ENCODE measurements at regions of chr17 and their contacts with region 1.

Region 1: DNA sequence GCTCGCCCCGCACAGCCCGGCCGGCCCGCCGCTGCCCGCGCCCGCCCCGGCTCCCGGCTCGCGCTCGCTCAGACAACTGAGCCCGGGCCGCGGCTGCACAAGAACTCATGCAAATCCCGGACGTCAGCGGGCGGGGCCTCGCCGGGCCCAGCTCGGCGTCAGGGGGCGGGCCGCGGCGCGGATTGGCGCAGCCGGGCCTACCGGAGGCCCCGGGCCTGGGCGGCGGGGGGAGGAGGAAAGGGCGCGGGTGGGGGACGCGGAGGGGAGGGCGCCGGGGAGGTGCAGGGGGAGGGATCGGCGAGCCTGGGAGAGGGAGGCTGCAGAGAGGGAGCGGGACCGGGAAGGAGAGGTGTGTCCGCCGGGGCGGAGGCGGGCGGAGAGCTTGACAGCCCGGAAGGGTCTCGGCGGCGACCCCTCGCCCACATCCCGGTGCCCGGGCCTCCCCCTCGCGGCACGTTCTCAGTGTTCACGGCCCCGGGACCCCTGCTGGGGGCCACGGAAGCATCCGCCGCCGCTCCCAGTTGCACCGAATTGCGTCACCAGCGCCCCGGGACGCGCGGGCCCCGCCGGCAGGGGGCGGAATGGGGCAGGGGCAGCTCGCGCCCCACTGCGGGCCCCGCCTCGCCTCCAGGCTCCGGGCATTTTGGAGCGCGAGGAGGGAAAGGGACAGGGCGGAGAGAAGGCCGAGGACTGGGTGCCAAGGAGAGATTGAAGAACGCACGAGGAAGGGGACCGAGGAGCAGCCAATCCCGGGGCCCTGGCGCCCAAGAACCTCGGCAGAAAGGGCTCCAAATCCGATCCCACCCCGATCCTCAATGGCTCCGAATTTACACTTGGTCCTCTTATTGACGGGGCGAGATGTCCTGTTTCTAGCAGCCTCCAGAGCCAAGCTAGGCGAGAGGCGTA is at the start of gene CBX4:
- DNase-seq: peak; percentile 92 to 97 (median 94)
- ATAC-seq: peak; percentile 63
- H3K4me3 ChIP-seq: peak within 1 kb of the TSS; percentile 74
- H3K27ac ChIP-seq: peak within 1 kb of the TSS; percentile 95
- H3K4me1 ChIP-seq: peaks cover 32 to 85% of the 10 kb centered on the region in 2 experiments
- H3K27me3 ChIP-seq: no peaks in the 10 kb centered on the region
- CTCF ChIP-seq: peak; percentile 90 to 93 (median 91)
- EP300 ChIP-seq: peak; percentile 90
- POLR2A ChIP-seq: peak; percentile 73
- RAD21 ChIP-seq: peak; percentile 78 to 79
- polyA plus RNA-seq, gene CBX4: 0.98 to 1.1 TPM

Region 2: DNA sequence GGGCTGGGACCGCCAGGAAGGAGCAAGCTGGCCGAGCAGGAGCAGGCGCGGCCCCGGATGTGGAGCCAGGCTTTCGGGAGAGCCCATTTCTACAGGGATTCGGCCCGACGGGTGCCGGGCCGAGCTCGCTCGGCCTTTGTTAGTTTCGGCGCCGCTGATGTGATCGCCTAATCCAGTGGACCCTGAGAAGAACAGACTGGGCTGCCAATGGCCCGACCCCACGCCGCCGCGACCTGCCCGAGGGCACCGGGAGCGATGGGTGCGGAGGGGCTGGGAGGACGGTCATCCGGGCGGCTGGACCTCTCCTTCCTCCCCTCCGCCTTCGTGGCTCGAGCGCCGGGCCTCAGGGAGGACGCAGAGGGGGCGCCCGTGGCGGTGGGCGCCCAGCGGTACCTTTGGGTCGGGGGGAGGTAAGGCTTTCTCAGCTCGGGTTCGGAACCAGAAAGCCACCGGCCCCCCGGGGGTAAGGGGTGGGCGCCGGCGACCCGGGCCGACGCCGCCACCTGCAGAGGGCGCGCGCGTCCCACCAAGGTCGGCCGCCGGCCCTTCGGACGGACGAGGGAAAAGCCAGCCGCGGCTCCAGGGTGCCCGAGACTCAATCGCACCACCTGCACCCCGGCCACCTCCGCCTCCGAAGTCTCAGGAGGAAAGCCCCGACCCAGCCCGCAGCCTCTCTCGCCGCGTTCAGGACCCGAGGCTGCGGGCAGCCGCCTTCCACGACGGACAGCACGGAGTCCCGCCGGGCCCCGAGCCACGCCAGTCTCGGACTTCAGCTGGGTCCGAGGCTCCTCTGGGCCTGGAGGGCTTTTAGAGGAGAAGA is 49.9 kb before region 1 on chr17:
- CTCF ChIA-PET with region 1: interaction called, 18 read pairs
- POLR2A ChIA-PET with region 1: interaction called, 10 read pairs
- in situ Hi-C with region 1: no loop called
- intact Hi-C with region 1: no loop called
- DNase-seq: peak; percentile 64 to 87 (median 82)
- ATAC-seq: peak; percentile 92
- H3K4me3 ChIP-seq: no peak overlapping the region
- H3K27ac ChIP-seq: no peak overlapping the region
- H3K4me1 ChIP-seq: peaks cover 3 to 42% of the 10 kb centered on the region in 2 experiments; a peak in 4 of 5 replicates
- H3K27me3 ChIP-seq: no peaks in the 10 kb centered on the region
- CTCF ChIP-seq: peak; percentile 76 to 89 (median 77)
- EP300 ChIP-seq: no peak
- POLR2A ChIP-seq: no peak
- RAD21 ChIP-seq: peak; percentile 91 to 93

Region 3: GRCh38 chr17:79803997-79804855 is 35.4 kb before region 1 on chr17:
- CTCF ChIA-PET with region 1: interaction called, 4 read pairs
- POLR2A ChIA-PET with region 1: interaction called, 386 read pairs
- in situ Hi-C with region 1: loop called (anchors 5 kb)
- intact Hi-C with region 1: loop called (anchors 5 kb)
- DNase-seq: no peak
- ATAC-seq: no peak
- H3K4me3 ChIP-seq: no peak overlapping the region
- H3K27ac ChIP-seq: no peak overlapping the region
- H3K4me1 ChIP-seq: peaks cover 41 to 67% of the 10 kb centered on the region in 2 experiments
- H3K27me3 ChIP-seq: no peaks in the 10 kb centered on the region
- CTCF ChIP-seq: no peak
- EP300 ChIP-seq: no peak
- POLR2A ChIP-seq: no peak
- RAD21 ChIP-seq: no peak

Region 4: GRCh38 chr17:79826204-79826680 is 13.4 kb before region 1 on chr17:
- CTCF ChIA-PET with region 1: no interaction called
- POLR2A ChIA-PET with region 1: interaction called, 386 read pairs
- in situ Hi-C with region 1: no loop called
- intact Hi-C with region 1: no loop called
- DNase-seq: peak; percentile 48 to 92 (median 62)
- ATAC-seq: peak; percentile 82
- H3K4me3 ChIP-seq: peak overlapping the region; percentile 44
- H3K27ac ChIP-seq: peak overlapping the region; percentile 87
- H3K4me1 ChIP-seq: peaks cover 68 to 76% of the 10 kb centered on the region in 2 experiments
- H3K27me3 ChIP-seq: no peaks in the 10 kb centered on the region
- CTCF ChIP-seq: no peak; a peak in 1 of 6 replicates
- EP300 ChIP-seq: peak; percentile 85
- POLR2A ChIP-seq: peak; percentile 80
- RAD21 ChIP-seq: no peak; a peak in 2 of 4 replicates

Region 5: DNA sequence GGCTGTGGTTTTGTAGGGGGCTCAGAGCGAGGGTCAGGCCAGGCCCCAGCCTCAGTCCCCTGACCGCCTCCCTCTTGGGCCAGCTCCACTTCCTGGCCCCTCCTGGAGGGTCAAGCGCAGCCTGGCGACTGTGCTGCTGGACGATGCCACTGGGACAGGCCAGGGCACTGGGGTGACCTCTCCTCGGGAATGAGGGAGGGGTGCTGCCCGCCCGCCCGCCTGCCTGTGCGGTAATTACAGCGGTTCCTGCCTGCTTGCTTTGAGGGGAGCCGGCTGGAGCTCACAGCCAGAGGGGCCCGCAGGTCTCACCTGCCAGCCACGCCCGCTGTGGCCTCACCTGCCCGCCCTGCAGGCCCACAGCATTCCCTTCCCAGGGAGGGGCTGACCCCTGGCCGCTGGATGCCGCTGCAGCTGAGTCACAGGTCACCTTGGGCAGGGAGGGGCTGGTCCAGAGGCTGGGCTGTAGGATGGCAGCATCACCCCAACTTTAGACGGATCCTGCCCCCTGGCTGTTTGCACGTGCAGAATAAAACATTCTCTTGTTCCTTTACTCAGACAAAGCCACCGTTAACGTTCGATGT is 76.3 kb after region 1 on chr17:
- CTCF ChIA-PET with region 1: interaction called, 14 read pairs
- POLR2A ChIA-PET with region 1: interaction called, 10 read pairs
- in situ Hi-C with region 1: no loop called
- intact Hi-C with region 1: loop called (anchors 2 kb)
- DNase-seq: peak; percentile 71 to 84 (median 82)
- ATAC-seq: peak; percentile 90
- H3K4me3 ChIP-seq: no peak overlapping the region
- H3K27ac ChIP-seq: no peak overlapping the region
- H3K4me1 ChIP-seq: peaks cover 0 to 22% of the 10 kb centered on the region in 2 experiments; a peak in 2 of 5 replicates
- H3K27me3 ChIP-seq: peaks cover 2 to 70% of the 10 kb centered on the region in 2 experiments; a peak in 3 of 5 replicates
- CTCF ChIP-seq: peak; percentile 66 to 81 (median 72)
- EP300 ChIP-seq: no peak
- POLR2A ChIP-seq: no peak
- RAD21 ChIP-seq: peak; percentile 88 to 92

Measured in K562 (cell line).